Breast epithelium (tissue), 4 donors: ENCODE measurements at regions of chr10 and their contacts with region 1.

Region 1: DNA sequence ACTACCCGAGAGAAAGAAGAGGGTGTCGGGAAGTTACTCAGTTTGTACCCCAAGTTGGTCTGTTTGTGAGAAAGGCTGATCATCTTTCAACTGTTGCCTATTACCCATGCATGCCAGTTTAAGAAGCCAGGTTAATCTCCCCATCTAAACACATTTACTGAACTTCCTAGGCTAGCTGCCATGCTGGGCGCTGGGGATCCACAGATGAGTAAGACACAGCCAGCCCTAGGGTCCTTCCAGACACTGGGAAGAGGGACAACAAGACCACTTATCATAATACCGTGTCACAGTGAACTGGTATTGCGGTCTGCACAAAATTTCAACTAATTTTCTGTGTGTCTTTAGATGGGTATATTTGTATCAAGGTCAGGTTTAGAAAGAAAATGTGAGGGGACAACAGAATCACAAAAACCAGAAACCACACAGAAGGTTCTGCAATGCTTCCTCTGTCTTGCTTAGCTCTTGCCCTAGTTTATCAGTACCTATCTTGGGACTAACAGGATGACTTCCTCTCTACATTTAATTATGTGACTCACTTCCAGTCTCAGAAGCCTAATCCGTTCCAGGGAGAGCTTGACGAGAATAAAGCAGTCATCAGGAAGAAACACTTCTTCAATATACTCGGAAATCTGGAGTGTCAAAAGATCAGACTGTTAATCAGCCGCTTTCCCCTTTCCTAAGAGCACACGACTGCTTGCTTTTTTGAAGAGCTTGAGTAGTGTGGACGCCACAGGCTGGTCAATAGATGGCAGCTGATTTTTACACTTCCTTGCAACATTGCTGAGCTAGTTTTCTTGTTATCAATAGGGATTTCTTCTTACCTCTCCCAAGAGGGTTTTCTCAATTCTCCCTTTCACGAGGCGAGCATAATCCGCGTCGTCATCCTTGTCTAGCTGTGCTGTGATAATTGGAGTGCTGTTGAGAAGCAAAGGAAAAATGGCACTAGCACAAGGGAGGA is 45.7 kb downstream of the POLR3A start:
- DNase-seq: no peak
- H3K4me3 ChIP-seq: no peak overlapping the region
- H3K27ac ChIP-seq: peak overlapping the region in 1 of 2 donors; percentile 26
- H3K4me1 ChIP-seq: no peaks in the 10 kb centered on the region
- H3K27me3 ChIP-seq: no peaks in the 10 kb centered on the region
- CTCF ChIP-seq: no peak
- POLR2A ChIP-seq: no peak

Region 2: DNA sequence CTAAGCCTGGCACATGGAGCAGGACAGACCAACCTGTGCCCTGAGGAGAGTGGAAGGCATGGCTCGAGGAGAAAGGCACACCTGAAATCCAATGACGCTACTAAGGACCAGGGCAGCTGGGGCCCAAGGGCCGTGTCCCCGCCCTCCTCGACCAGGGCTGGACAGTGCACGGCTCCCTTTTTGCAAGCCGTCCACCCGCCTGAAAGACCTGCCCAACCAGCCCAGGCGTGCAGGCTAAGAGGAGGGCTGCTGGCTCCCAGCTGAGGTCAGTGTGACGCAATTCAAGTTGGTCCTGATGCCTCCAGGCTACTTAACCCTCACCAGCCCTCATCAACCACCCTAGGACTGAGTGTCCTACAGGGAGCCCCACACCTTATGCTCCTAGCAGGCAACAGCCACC is 126.4 kb before region 1 on chr10:
- intact Hi-C with region 1: loop called (anchors 10 kb)
- DNase-seq: peak; percentile 73 to 82
- H3K4me3 ChIP-seq: peak overlapping the region in 2 of 3 donors; percentile 3 to 48
- H3K27ac ChIP-seq: peak overlapping the region; percentile 75 to 85
- H3K4me1 ChIP-seq: peaks cover 0 to 3% of the 10 kb centered on the region in 2 donors
- H3K27me3 ChIP-seq: no peaks in the 10 kb centered on the region
- CTCF ChIP-seq: no peak
- POLR2A ChIP-seq: no peak